Right ventricle myocardium superior (tissue), 1 donor: ENCODE measurements at regions of chr9 and their contacts with region 1.

Region 1: DNA sequence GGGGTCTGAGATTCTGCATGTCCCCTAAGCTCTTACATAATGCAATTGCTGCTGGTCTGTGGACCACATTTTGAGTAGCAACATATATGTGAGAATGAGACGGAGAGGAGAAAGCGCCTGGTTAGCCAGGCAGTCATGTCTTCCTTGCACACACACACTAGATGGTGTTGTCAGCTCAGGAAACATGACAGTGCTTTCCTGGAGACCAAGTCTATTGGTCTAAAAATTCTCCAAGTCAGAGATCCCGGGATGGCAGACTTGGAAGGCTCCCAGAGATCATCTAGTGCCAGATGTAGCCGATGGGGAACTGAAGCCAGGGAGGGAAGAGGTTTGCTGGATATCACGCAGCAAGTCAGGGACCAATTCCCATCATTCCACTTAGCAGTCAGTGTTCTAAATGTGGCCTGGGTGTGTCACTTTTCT is 53.4 kb downstream of the GALNT12 start:
- DNase-seq: peak; percentile 79
- ATAC-seq: peak; percentile 85

Region 2: DNA sequence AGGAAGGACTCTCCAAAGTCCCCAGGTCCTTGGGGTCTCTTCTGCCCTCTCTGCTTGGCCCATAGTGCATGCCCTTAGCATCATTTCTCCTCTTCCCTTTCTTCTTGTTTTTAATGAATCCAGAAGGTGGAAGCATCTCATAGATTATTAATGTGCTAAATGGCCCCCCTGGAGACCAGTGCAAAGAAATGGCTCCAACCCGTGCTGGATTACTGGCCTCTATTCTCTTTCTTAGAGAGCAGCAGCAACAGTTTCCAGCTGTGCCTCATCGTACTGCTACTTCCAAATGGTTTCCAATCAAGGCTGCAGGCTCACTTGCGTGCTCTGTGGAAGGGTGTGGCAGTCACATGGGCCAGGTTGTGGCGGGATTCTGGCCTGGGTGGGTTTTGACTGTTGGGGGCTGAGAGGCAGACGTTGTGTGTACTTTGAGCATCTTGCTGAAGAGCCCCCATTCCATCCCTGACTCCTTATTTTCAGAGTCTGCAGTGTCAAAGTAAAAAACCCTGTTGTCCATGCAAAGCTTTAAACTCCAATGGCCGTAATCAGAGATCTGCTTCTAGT is 291.9 kb before region 1 on chr9:
- intact Hi-C with region 1: no loop called
- DNase-seq: no peak
- ATAC-seq: no peak

Region 3: GRCh38 chr9:98974994-98975712 is 114.3 kb after region 1 on chr9:
- intact Hi-C with region 1: loop called (anchors 10 kb)
- DNase-seq: peak; percentile 92
- ATAC-seq: peak; percentile 73

Region 4: DNA sequence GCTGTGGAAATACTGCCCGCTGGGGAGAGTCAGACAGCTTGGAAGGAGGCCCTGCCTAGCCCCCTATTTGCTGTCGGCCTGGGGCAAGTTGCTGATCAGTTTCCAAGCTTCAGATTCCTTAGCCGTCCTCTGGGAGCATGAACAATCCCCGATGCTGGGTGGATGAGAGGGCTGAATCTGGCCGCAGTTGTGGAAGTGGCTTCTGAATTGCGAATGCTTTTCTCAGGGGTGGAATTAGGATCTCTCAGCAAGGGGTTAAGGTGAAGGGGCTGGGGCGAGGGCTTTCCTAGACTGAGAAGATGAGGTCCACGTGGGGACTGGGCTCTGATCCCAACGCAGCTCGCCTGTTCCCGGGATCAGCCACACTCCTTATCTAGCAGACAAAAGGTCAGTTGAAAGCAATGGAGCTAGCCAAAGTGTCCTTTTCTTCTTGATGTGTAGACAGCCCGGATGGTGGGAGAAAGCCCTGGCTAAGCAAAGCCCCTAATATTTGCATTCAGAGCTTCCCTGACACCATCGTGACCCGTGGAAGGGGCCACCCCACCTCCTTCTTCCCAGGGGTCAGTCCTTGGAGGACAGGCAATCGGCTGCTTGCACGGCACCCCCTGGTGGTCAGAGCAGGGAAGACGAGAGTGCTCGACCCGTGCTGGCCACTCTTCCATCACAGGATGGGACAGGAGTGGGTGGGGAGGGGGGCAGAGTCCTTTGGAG is 137.7 kb after region 1 on chr9:
- intact Hi-C with region 1: loop called (anchors 5 kb)
- DNase-seq: peak; percentile 91
- ATAC-seq: peak; percentile 85

Region 5: DNA sequence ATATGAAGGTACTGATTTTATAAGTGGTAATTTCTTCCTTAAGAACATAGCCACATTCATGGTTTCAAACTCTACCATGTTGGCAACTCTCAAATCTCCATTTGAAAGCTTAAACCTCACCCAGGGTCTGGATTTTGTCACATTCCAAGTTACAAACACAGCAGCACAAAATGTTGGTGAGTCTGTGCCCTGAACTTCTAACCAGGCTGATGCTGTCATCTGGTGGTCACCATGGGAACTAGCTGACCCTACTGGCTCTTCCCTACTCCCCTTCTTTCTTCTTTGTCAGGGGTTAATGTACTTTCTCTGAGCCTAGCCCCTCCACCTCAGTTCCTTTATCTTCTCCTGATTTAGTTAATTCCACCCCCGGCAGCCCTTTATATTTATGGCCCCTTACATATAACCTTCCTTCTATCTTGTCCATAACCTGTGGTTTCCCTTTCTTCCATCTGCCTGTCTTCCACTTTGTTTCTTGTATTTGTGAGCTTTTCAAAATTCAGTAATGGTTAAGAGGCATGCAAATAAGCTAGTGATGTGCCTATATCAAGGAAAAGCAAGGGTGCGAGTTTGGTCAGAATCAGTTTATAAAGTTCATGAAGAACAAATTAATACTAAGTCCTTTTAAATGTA is 279.9 kb after region 1 on chr9:
- intact Hi-C with region 1: loop called (anchors 2 kb)
- DNase-seq: no peak
- ATAC-seq: peak; percentile 90